ENCODE measurements at regions of chr3 and their contacts with region 1.

Region 1: DNA sequence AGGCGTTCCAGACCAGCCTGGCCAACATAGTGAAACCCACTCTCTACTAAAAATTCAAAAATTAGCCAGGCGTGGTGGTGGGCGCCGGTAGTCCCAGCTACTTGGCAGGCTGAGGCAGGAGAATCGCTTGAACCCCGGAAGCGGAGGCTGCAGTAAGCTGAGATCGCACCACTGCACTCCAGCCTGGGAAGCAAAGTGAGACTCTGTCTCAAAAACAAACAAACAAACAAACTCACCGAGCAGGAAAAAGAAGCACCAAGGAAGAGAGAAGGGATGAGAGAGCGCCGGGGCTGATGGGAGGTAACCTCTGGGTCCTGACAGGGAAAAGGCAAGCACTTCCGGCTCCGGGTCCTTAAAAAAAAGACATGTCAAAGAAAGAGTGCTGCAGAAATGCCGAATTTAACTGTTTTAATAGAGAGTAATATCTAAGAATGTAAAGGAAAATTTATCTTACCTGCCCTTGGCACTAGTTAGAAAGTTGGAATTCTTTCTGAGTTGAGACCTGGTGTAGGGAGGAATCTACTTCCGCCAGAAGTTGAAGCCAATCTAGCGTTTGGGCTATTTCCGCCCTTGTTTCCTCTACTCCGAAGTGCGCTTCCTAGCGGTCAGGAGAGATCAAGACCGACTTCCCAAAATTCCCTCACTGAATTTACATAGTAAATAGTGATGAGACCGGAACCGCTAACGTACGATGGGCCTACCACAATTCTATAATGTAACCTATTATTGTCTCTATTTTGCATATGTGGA is 29.1 kb downstream of the EFCAB12 start:
- DNase-seq: peak; percentile 55 to 85 (median 82)
- H3K4me3 ChIP-seq: peak overlapping the region; percentile 95
- H3K4me3 Mint-ChIP-seq: peak overlapping the region; percentile 96 to 99 (median 96)
- H3K27ac ChIP-seq: peak overlapping the region; percentile 94
- H3K27ac Mint-ChIP-seq: peak overlapping the region; percentile 93 to 99 (median 98)
- H3K4me1 ChIP-seq: peaks cover 20% of the 10 kb centered on the region
- H3K4me1 Mint-ChIP-seq: peaks cover 36 to 51% (median 49%) of the 10 kb centered on the region in 3 donors
- H3K27me3 ChIP-seq: no peaks in the 10 kb centered on the region
- H3K27me3 Mint-ChIP-seq: no peaks in the 10 kb centered on the region

Region 2: DNA sequence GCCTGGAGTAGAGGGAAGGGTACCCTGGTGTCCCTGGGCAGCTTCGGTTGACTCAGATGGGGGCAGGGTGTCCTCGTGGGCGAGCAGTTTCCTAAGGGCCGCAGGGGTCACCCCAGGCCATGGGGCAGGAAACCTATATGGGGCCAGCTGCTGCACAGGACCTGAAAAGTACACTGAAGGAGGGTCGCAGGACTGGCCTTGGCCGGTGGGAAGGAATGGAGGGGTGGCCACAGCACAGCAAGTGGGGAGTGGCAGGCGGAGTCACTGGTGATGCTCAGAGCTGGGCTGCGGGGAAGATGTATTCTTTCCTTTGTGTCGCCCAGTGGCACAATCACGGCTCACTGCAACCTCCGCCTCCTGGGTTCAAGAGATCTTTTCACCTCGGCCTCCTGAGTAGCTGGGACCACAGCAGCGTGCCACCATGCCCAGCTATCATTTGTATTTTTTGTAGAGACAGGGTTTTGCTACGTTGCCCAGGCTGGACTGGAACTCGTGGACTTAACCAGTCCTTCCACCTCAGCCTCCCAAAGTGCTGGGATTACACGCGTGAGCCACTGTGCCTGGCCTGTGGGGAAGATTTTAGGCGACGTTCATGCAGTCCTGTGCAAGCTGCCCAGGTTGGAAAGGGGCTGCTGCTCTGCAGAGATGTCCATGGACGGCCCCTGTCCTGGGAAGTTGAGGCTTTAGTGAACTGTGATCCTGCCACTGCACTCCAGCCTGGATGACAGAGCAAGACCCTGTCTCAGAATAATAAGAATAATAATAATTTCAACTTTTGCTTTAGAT is 28.1 kb before region 1 on chr3:
- CTCF ChIA-PET with region 1: no interaction called
- POLR2A ChIA-PET with region 1: no interaction called
- DNase-seq: no peak
- H3K4me3 ChIP-seq: no peak overlapping the region
- H3K4me3 Mint-ChIP-seq: no peak overlapping the region
- H3K27ac ChIP-seq: no peak overlapping the region
- H3K27ac Mint-ChIP-seq: no peak overlapping the region
- H3K4me1 ChIP-seq: no peaks in the 10 kb centered on the region
- H3K4me1 Mint-ChIP-seq: no peaks in the 10 kb centered on the region
- H3K27me3 ChIP-seq: no peaks in the 10 kb centered on the region
- H3K27me3 Mint-ChIP-seq: peaks cover 0 to 2% of the 10 kb centered on the region in 2 donors

Region 3: GRCh38 chr3:129383292-129383860 is 15.9 kb before region 1 on chr3:
- CTCF ChIA-PET with region 1: interaction called, 11 read pairs
- POLR2A ChIA-PET with region 1: no interaction called
- DNase-seq: peak in 4 of 5 donors; percentile 6 to 66 (median 26)
- H3K4me3 ChIP-seq: no peak overlapping the region
- H3K4me3 Mint-ChIP-seq: no peak overlapping the region
- H3K27ac ChIP-seq: no peak overlapping the region
- H3K27ac Mint-ChIP-seq: peak overlapping the region in 2 of 8 donors; percentile 6 to 14
- H3K4me1 ChIP-seq: no peaks in the 10 kb centered on the region
- H3K4me1 Mint-ChIP-seq: no peaks in the 10 kb centered on the region
- H3K27me3 ChIP-seq: no peaks in the 10 kb centered on the region
- H3K27me3 Mint-ChIP-seq: no peaks in the 10 kb centered on the region

Region 4: DNA sequence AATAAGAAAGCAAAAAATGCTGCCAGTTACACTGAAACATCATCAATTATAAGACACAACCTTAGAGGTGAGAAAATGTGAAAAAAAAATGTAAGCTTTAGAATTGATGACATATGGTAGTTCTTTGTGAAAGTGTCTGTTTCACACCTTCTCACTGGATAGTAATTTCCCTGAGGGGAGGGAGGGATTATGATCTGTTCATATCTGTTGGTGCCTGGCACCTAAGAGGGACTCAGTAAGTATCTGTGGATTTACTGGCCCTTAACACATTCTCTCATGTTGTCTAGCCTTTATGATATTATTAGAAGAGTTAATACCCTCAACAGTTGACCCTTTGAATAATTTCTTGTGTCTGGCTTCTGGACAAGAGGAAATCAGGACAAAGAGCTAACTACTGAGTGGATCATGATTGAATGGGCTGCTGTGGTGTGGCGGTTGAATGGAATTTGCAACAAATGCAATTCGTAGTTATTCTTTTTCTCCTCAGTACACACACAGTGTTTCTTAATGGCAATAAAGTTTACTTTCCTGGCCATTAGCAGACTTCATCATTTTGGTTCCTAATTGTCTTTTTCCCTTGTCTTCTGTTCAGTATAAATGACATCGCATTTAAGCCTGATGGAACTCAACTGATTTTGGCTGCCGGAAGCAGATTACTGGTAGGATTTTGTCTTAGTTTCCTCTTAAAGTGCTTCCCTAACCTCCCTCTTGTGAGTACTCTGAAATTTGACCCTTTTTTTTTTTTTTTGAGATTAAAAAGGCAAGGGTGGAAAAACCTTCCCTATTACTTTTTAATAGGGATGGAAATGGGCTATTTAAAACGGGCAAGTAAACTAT is 50.2 kb after region 1 on chr3:
- CTCF ChIA-PET with region 1: no interaction called
- POLR2A ChIA-PET with region 1: no interaction called
- DNase-seq: no peak
- H3K4me3 ChIP-seq: no peak overlapping the region
- H3K4me3 Mint-ChIP-seq: no peak overlapping the region
- H3K27ac ChIP-seq: peak overlapping the region; percentile 17
- H3K27ac Mint-ChIP-seq: peak overlapping the region in 1 of 8 donors; percentile 9
- H3K4me1 ChIP-seq: no peaks in the 10 kb centered on the region
- H3K4me1 Mint-ChIP-seq: no peaks in the 10 kb centered on the region
- H3K27me3 ChIP-seq: no peaks in the 10 kb centered on the region
- H3K27me3 Mint-ChIP-seq: no peaks in the 10 kb centered on the region